ENCODE measurements at regions of chr3 and their contacts with region 1.

Region 1: DNA sequence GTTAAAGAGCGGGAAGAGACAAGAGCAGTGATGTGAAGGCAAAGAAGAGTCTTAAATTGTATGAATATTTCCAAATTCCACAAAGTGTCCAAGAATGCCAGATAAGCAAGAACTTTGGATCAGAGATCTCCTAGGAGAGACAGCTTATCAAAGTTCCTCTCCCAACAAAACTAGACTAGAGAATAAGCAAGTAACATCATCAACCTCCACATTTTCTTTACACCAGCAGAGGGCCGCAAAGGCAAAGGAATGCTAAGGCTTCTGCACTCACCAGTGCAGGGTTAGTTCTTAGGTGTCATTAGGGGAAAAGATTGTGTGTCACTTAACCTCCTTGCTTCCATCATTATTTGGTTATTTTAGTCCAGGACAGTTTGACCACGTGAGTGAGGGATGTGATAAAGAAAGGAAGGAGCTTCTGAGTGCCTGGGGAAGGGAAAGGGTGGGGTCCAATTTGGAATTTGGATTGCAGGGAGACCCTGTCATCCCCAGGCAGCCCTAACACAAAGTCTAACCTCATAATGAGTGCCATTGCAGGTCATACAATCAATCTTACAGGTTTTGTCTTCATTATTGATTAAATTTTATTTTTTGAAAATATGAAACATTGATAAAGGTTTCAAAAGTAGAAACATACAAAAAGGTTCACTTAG is 7.5 kb upstream of the CMTM6 start:
- DNase-seq: no peak
- ATAC-seq: peak; percentile 96
- H3K4me3 ChIP-seq: no peak overlapping the region
- H3K27ac ChIP-seq: no peak overlapping the region
- H3K4me1 ChIP-seq: no peaks in the 10 kb centered on the region
- H3K27me3 ChIP-seq: no peaks in the 10 kb centered on the region
- CTCF ChIP-seq: peak; percentile 78

Region 2: DNA sequence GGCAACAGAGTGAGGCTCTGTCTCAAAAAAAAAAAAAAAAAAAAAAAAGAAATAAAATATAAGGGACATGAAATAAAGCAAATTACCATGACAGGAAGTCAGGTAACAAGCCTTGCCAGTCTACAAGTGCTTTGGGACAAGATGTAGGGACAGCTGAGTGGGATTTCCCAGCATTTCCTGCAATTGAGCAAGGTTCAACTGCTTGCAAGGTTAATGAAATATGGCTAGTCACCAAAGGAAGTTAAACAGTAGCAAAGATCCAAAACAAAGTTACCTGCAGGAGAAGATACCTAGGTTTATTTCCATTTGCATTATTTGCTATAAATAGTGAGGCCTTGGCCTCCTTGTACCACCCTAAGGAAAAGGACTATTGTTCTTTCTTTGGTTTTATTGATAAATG is 152.4 kb after region 1 on chr3:
- intact Hi-C with region 1: loop called (anchors 5 kb)
- DNase-seq: no peak
- ATAC-seq: peak; percentile 34
- H3K4me3 ChIP-seq: no peak overlapping the region
- H3K27ac ChIP-seq: no peak overlapping the region
- H3K4me1 ChIP-seq: no peaks in the 10 kb centered on the region
- H3K27me3 ChIP-seq: no peaks in the 10 kb centered on the region
- CTCF ChIP-seq: no peak

Measured in upper lobe of right lung (tissue), 1 donor.